Panc1 (cell line): ENCODE measurements at regions of chr1 and their contacts with region 1.

Region 1: DNA sequence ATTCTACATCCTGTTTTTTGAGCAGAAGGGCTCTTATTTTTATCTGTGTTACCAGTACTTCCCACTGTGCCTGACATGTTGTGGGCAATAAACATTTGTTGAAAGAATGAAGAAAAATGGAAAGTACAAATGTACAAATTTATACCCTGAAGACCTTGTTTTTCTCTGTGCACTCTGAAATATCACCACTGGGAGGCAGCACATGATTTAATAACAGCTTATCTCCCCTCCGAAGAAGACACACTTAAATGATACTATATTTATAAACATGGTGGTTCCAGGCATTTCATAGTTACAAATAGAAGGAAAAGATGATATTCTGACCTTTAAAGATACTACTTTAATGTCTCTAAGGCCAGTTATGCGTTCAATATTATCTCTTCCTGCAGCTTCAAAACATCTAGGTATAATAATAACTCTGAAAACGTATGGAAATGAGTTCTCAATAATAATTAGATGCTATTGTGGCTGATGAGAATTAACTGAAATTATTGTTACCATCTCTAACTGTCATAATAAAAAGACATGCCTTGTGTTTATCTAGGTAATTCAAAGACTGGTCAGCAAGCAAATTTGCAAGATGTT is 12.8 kb downstream of the DYNLT5 start:
- DNase-seq: peak; percentile 60
- ATAC-seq: no peak; the same call in 1 of the 2 replicates
- H3K4me3 ChIP-seq: no peak overlapping the region
- H3K27ac ChIP-seq: no peak overlapping the region
- H3K4me1 ChIP-seq: no peaks in the 10 kb centered on the region
- H3K27me3 ChIP-seq: no peaks in the 10 kb centered on the region
- CTCF ChIP-seq: peak; percentile 76; the same call in 1 of the 2 replicates

Region 2: GRCh38 chr1:66575739-66576138 is 189.3 kb before region 1 on chr1:
- CTCF ChIA-PET with region 1: no interaction called
- POLR2A ChIA-PET with region 1: no interaction called
- in situ Hi-C with region 1: no loop called
- intact Hi-C with region 1: no loop called
- DNase-seq: no peak
- ATAC-seq: no peak
- H3K4me3 ChIP-seq: no peak overlapping the region
- H3K27ac ChIP-seq: no peak overlapping the region
- H3K4me1 ChIP-seq: no peaks in the 10 kb centered on the region
- H3K27me3 ChIP-seq: no peaks in the 10 kb centered on the region
- CTCF ChIP-seq: no peak

Region 3: DNA sequence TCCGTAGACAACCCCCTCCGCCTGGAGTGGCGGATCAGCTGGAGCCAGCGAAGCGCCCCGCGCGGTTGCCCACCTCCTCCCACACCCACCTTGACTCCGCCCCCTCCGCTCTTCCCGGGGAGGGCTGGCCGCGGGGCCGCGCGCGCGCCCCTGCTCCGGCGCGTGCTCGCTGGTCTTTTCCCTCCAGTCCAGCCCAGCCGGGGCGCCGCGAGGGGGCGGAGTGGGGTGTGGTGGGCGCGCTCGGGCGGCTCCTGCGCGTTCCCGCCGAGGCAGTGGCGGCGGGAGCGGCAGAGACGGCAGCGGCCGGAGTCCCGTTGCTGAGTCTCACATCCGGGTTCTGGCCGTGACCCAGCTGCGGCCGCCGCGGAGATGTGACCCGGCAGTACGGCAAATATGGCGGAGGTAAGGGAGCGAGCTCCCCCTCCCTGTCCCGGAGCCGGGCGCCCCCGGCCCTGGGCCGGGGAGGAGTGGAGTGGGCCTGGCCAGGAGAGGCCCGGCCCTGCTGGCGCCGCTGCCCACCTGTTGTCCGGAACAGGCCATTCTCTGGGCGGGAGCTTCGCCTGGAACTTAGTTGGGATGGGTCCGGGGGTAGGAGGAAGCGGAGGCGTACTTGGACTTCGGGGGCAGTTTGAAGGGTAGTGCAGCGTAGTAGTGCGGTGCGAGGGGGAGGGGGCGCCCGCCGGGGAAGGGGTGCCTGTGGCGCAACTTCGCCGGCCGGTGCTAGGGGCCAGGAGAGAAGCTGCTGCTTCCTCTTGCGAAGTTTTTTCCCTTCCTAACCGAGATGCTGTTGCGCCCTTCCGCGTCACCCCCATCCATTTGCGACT is 165.1 kb after region 1 on chr1:
- CTCF ChIA-PET with region 1: interaction called, 3 read pairs
- POLR2A ChIA-PET with region 1: no interaction called
- in situ Hi-C with region 1: no loop called
- intact Hi-C with region 1: loop called (anchors 10 kb)
- DNase-seq: peak; percentile 74
- ATAC-seq: peak; percentile 84
- H3K4me3 ChIP-seq: peak overlapping the region; percentile 80 to 89
- H3K27ac ChIP-seq: peak overlapping the region; percentile 98
- H3K4me1 ChIP-seq: peaks cover 44% of the 10 kb centered on the region
- H3K27me3 ChIP-seq: no peaks in the 10 kb centered on the region
- CTCF ChIP-seq: peak; percentile 50

Region 4: DNA sequence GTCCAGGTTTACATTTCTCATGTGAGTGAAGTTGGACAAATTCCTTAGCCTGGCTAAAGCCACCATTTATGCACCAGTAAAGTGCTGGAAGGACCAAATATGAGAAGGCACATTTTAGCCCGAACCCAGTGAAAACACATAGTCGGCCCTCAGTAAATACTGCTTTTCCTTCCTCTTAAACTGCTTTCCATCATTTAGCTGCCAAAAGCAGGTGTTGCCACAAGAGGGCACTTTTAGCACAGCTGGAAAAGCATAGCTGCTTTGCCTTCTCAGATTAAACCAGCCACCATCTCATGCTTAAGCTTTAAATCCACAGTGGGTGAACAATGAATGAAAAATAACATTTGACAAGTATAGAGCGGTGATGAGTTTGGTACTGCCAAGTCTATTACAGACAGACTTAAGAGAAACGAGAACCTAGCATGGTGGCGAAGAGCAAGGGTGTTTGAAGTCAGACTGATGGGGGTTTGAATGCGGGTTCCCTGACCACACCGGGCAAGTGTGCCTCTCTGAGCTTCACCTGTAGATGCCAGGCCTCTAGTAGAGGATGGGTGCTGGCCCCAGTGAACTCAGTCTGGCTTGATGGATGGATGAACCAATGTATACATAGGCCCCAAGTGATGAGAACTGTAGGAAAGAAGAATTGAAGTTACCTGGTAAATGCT is 231.1 kb after region 1 on chr1:
- CTCF ChIA-PET with region 1: no interaction called
- POLR2A ChIA-PET with region 1: no interaction called
- in situ Hi-C with region 1: no loop called
- intact Hi-C with region 1: loop called (anchors 10 kb)
- DNase-seq: peak; percentile 71
- ATAC-seq: peak; percentile 87
- H3K4me3 ChIP-seq: no peak overlapping the region
- H3K27ac ChIP-seq: no peak overlapping the region
- H3K4me1 ChIP-seq: no peaks in the 10 kb centered on the region
- H3K27me3 ChIP-seq: no peaks in the 10 kb centered on the region
- CTCF ChIP-seq: peak; percentile 88

Region 5: DNA sequence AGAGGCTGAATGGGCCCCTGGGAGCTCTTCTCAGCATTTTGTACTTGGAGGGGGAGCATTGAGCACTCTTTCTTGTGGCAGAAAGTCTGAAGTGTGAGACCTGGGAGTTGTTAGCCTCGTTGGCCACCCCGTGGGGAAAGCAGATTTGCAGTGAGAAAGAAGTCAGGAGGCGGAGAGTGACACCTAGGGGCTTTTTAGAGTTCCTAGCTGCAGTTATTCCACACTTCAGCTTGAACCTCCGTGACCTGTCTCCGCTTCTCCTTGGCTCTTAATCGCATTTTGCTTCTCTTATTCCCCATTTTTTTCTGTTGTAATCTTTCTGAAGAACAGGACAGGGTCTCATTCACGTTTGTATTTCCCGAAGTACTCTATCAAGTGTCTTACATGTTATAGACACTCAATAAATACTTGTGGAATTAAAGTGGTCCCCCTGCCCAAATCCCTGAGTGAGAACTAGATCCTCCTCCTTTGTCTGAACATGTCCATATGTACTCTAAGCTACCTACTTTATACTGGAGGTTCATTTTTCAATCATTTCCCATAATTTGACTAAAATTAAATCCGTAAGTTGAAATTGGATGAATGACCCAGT is 384.2 kb after region 1 on chr1:
- CTCF ChIA-PET with region 1: no interaction called
- POLR2A ChIA-PET with region 1: no interaction called
- in situ Hi-C with region 1: no loop called
- intact Hi-C with region 1: loop called (anchors 5 kb)
- DNase-seq: peak; percentile 66
- ATAC-seq: peak; percentile 98
- H3K4me3 ChIP-seq: no peak overlapping the region
- H3K27ac ChIP-seq: no peak overlapping the region
- H3K4me1 ChIP-seq: no peaks in the 10 kb centered on the region
- H3K27me3 ChIP-seq: no peaks in the 10 kb centered on the region
- CTCF ChIP-seq: peak; percentile 85

Region 6: GRCh38 chr1:67214420-67215174 is 449.5 kb after region 1 on chr1:
- CTCF ChIA-PET with region 1: no interaction called
- POLR2A ChIA-PET with region 1: no interaction called
- in situ Hi-C with region 1: no loop called
- intact Hi-C with region 1: loop called (anchors 5 kb)
- DNase-seq: no peak
- ATAC-seq: peak; percentile 68; the same call in 1 of the 2 replicates
- H3K4me3 ChIP-seq: no peak overlapping the region
- H3K27ac ChIP-seq: no peak overlapping the region
- H3K4me1 ChIP-seq: no peaks in the 10 kb centered on the region
- H3K27me3 ChIP-seq: peaks cover 6% of the 10 kb centered on the region; the same call in 1 of the 2 replicates
- CTCF ChIP-seq: peak; percentile 59